Activated CD4-positive, alpha-beta T cell treated with anti-CD3 and anti-CD28 coated beads, Interleukin-2, amount 10 ng/mL, durations not matched to agents 7 days and 5 days (primary cell): ENCODE measurements at regions of chr1 and their contacts with region 1.

Region 1: GRCh38 chr1:25997828-25998761 is at the start of gene PAFAH2:
- DNase-seq: peak; percentile 98
- H3K4me3 Mint-ChIP-seq: peak within 1 kb of the TSS; percentile 94
- H3K27ac Mint-ChIP-seq: peak within 1 kb of the TSS; percentile 96
- H3K4me1 Mint-ChIP-seq: peaks cover 26% of the 10 kb centered on the region
- H3K27me3 Mint-ChIP-seq: peaks cover 2% of the 10 kb centered on the region
- total RNA-seq, gene PAFAH2: 10.1 to 11.9 TPM

Region 2: DNA sequence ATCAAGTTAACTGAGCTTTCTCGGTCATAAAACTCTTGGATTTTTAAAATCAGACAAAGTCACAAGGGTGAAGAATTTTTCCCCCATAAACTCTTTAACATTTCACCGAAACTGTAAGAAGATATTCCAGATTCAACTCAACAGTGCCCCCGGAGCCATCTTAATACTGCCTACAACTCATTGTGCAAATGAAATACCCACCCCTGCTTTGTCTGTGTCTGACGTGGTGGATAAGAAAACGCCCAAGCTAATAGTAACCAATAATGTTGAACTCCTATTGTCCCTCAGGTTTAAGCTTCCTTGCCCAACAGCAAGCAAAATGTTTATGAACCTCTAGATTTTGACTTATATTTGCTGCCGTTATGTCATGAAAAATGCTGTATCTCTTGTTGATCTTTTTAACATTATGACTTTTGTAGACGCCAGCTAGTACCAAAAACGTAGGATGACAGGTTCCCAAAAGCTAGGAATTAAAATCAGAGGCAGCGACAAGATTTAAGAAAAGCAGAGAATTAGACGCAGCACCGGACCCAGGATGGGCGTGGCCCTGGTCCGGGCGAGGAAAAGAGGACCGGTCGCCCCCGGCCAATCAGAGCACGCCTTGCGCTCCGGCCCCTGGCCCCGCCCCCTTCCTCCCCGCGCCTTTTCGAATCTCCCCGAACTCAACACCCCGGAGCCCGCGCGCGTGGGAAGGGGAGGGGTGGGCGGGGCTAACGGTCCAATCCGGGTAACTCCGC is 93.0 kb before region 1 on chr1:
- CTCF ChIA-PET with region 1: interaction called, 154 read pairs
- POLR2A ChIA-PET with region 1: no interaction called
- DNase-seq: peak; percentile 97
- H3K4me3 Mint-ChIP-seq: peak overlapping the region; percentile 99
- H3K27ac Mint-ChIP-seq: peak overlapping the region; percentile 99
- H3K4me1 Mint-ChIP-seq: peaks cover 49% of the 10 kb centered on the region
- H3K27me3 Mint-ChIP-seq: peaks cover 19% of the 10 kb centered on the region

Region 3: GRCh38 chr1:25971066-25971810 is 26.9 kb before region 1 on chr1:
- CTCF ChIA-PET with region 1: interaction called, 11 read pairs
- POLR2A ChIA-PET with region 1: no interaction called
- DNase-seq: peak; percentile 39
- H3K4me3 Mint-ChIP-seq: peak overlapping the region; percentile 13
- H3K27ac Mint-ChIP-seq: peak overlapping the region; percentile 89
- H3K4me1 Mint-ChIP-seq: peaks cover 34% of the 10 kb centered on the region
- H3K27me3 Mint-ChIP-seq: no peaks in the 10 kb centered on the region